Activated B cell treated with CpG ODN at 0.5 μM for 24 hours (primary cell): ENCODE measurements at regions of chr3 and their contacts with region 1.

Region 1: DNA sequence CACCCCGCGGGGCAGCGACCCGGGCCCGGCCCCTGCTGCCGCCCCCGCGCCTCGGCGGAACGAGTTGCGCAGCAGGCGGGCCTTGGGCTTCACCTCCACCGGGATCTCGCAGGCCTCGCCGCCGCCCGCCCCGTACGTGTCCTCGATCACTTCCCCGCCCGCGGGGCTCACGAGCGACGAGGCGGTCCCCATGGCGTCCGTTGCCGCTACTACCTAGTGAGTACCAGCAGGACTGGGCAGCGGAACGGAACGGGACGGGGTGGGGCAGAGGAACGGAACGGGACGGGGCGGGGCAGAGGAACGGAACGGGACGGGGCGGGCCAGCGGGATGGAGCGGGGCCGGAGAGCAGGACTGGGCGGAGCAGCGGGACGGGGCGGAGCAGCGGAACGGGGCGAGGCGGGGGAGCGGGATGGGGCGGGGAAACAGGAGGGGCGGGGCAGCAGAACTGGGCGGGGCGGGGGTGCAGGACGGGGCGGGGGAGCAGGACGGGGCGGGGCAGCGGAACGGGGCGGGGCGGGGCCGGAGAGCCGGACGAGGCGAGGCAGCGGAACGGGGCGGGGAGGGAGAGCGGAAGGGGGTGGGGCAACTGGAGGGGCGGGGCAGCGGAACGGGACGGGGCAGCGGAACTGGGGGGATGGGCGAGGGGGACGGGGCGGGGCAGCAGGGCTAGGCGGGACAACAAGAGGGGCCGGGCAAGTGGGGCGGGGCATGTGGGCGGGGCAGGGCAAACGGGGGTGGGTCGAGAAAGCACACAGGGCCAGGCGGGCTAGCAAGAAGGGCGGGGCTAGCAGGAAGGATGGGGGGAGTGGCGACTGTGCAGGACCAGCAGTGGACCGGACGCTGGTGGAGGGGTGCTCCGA is at the start of gene NPHP3:
- DNase-seq: peak; percentile 82
- ATAC-seq: peak; percentile 80
- H3K4me3 Mint-ChIP-seq: peak within 1 kb of the TSS; percentile 90
- H3K27ac Mint-ChIP-seq: peak within 1 kb of the TSS; percentile 85
- H3K4me1 Mint-ChIP-seq: peaks cover 31% of the 10 kb centered on the region
- H3K27me3 Mint-ChIP-seq: no peaks in the 10 kb centered on the region
- CTCF ChIP-seq: no peak
- total RNA-seq, gene NPHP3: 20.2 and 23.2 TPM in 2 replicates

Region 2: GRCh38 chr3:131026321-131027178 is 1695.8 kb before region 1 on chr3 and contains the starts of genes ASTE1 and NEK11:
- CTCF ChIA-PET with region 1: no interaction called
- POLR2A ChIA-PET with region 1: no interaction called
- intact Hi-C with region 1: loop called (anchors 1 kb)
- DNase-seq: peak; percentile 89
- ATAC-seq: peak; percentile 97
- H3K4me3 Mint-ChIP-seq: peak within 1 kb of the TSS; percentile 96
- H3K27ac Mint-ChIP-seq: peak within 1 kb of the TSS; percentile 97
- H3K4me1 Mint-ChIP-seq: peaks cover 52% of the 10 kb centered on the region
- H3K27me3 Mint-ChIP-seq: no peaks in the 10 kb centered on the region
- CTCF ChIP-seq: no peak
- total RNA-seq, gene ASTE1: 15.6 and 16.9 TPM in 2 replicates
- total RNA-seq, gene NEK11: 1.5 and 1.9 TPM in 2 replicates

Region 3: GRCh38 chr3:132659365-132660051 is 62.9 kb before region 1 on chr3 and contains the start of gene ACAD11:
- CTCF ChIA-PET with region 1: interaction called, 3 read pairs
- POLR2A ChIA-PET with region 1: interaction called, 6 read pairs
- intact Hi-C with region 1: loop called (anchors 1 kb)
- DNase-seq: peak; percentile 55
- ATAC-seq: peak; percentile 74
- H3K4me3 Mint-ChIP-seq: peak within 1 kb of the TSS; percentile 97
- H3K27ac Mint-ChIP-seq: peak within 1 kb of the TSS; percentile 93
- H3K4me1 Mint-ChIP-seq: peaks cover 35% of the 10 kb centered on the region
- H3K27me3 Mint-ChIP-seq: no peaks in the 10 kb centered on the region
- CTCF ChIP-seq: no peak
- total RNA-seq, gene ACAD11: 16.4 and 24.0 TPM in 2 replicates

Region 4: GRCh38 chr3:132911736-132912414 is 189.5 kb after region 1 on chr3:
- CTCF ChIA-PET with region 1: no interaction called
- POLR2A ChIA-PET with region 1: no interaction called
- intact Hi-C with region 1: no loop called
- DNase-seq: no peak
- ATAC-seq: no peak
- H3K4me3 Mint-ChIP-seq: no peak overlapping the region
- H3K27ac Mint-ChIP-seq: no peak overlapping the region
- H3K4me1 Mint-ChIP-seq: no peaks in the 10 kb centered on the region
- H3K27me3 Mint-ChIP-seq: no peaks in the 10 kb centered on the region
- CTCF ChIP-seq: no peak

Region 5: DNA sequence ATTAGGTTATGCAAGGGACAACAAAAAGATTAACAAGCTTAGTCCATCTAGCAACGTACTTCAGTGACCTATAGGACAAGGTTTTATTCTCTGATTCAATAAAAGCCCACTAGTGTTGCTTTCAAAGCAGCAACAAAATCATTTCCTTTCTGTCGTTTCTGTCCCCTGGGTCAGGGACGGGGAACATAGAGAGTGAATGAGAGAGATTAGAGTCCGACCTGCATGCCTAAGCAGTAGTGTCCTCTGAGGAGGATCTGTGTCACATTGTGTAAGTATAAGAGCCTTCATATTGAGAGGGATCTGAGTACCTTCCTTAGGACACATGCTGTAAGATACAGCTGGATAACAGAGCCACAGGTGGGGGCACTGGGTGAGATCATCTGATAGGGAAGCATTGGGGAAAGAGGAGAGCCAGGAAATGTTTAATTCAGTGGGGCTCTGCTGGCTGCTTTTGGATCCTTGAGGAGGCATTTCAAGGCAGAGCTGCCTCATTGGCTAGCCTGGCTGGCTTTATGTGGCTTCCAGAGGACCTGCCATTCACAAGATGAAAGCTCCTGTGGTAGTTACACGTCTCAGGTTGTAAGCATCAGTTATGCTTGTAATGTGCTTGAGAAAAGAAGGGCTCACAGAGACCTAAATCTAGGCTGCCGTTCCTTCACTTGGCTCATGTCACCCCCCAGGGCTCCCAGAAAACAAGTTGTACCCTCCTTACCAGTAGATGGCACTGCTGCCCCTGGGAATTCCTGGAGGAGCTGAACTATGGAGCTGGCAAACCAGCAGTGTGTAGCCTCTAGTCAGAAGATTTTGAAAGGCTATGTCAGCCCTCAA is 318.5 kb after region 1 on chr3:
- CTCF ChIA-PET with region 1: no interaction called
- POLR2A ChIA-PET with region 1: no interaction called
- intact Hi-C with region 1: no loop called
- DNase-seq: no peak
- ATAC-seq: no peak
- H3K4me3 Mint-ChIP-seq: no peak overlapping the region
- H3K27ac Mint-ChIP-seq: no peak overlapping the region
- H3K4me1 Mint-ChIP-seq: peaks cover 8% of the 10 kb centered on the region
- H3K27me3 Mint-ChIP-seq: peaks cover 27% of the 10 kb centered on the region
- CTCF ChIP-seq: no peak

Region 6: DNA sequence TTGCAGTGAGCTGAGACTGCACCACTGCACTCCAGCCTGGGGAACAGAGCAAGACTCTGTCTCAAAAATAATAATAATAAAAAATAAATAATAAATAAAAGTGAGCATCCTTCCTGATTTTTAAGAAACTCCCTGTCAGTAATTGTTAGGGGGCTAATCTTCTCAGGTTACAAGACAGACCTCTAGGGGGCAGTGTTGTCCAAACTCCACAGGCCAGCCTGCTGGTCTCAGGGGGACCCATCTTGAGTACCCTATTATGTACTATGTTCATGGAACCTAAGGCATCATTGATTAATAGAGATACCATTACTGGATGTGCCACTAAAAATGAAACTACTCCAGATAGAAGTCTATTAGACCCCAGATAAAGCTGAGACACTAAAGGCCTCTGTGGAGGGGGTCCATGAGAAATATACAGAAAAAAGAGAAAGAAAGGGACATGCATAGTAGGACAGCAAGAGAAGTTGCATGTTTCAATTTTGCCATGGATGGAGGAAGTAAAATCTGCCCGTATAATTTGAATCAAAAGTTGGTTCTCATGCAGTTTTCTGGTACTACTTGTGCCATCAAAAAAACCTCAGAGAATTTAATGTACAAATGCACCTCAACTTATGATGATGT is 765.6 kb after region 1 on chr3:
- CTCF ChIA-PET with region 1: no interaction called
- POLR2A ChIA-PET with region 1: interaction called, 16 read pairs
- intact Hi-C with region 1: no loop called
- DNase-seq: no peak
- ATAC-seq: peak; percentile 20
- H3K4me3 Mint-ChIP-seq: no peak overlapping the region
- H3K27ac Mint-ChIP-seq: no peak overlapping the region
- H3K4me1 Mint-ChIP-seq: peaks cover 57% of the 10 kb centered on the region
- H3K27me3 Mint-ChIP-seq: no peaks in the 10 kb centered on the region
- CTCF ChIP-seq: no peak

Region 7: DNA sequence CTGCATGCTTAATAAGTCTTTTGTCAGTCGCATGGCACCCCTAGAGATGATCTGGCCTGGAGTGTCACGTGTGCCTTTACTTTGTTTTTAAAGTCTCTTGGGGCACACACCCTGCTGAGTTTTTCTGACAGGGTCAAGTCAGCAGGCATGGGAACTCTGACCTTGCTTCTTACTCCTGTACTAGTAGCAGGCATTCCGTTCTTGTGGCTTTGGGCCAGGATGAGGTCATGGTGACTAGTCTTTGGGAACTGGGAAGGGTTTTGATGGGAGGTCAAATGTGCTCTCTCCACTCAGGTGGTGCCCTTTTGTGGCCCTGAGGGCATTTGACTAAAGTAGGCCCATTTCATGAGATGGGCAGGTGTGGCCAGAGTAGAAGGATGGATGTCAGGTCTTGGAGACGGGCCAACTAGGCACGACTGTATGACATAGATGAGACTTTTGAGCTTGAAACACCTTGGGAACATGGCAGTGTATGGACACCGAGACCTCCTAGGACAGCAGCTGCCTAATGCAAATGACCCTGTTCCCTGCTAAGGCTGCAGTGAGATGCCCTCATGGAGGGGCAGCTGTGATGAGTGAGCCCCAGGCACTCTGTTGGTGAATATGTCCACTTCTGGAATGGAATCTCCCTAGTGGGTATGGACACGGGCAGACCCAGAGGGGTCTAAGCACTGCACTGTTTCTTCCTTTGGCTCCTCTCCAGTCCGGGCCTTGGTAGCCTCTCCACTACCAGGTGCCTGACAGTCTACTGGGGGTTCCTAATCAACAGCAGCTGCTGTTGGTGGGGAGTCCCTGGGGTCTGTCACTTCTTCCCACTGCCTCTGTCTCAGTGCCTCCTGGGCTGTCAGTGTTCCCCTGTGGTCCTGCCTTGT is 1099.6 kb after region 1 on chr3:
- CTCF ChIA-PET with region 1: interaction called, 3 read pairs
- POLR2A ChIA-PET with region 1: no interaction called
- intact Hi-C with region 1: loop called (anchors 1 kb)
- DNase-seq: no peak
- ATAC-seq: no peak
- H3K4me3 Mint-ChIP-seq: no peak overlapping the region
- H3K27ac Mint-ChIP-seq: no peak overlapping the region
- H3K4me1 Mint-ChIP-seq: no peaks in the 10 kb centered on the region
- H3K27me3 Mint-ChIP-seq: no peaks in the 10 kb centered on the region
- CTCF ChIP-seq: no peak

Region 8: DNA sequence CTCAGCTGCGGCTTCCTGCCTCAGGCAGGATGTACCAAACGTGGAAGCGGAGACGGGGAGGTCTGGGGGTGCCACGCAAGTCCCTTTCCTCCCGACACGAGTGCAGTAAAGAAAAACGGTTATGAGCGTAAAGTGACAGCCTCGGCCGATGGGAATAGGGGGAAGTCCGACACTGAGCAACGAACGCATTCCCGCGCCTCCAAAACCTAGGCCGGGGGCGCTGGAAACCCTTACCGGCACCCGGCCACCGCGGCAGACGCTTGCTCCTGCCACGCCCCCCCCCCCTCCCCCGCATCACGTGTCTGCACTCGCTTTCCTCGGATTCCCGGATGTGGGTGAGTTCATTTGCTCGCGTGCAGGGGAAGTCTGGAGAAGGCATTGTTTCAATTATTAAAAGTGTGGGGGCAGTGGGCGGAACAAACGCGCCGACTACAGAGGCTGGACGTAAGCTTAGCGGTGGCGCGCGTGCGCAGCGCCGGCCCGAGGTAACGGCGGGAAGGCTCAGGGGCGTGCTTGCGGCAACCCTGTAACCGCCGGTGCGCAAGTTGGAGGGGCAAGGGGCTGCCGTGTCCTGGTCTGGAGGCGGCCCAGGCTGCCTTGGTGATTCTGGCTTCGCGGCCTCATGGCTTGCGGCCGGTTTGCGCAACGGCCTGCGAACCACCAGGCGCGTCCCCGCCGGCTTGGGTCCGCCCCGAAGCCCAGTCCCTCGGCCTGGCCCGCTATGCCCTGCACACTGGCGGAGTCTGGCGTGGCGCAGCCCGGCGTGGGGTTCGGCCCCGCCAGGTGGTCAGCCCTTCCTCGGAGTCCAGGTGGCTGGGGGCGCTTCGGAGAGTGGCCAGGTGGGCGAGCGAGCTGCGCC is 1763.6 kb after region 1 on chr3 and contains the starts of genes ANAPC13 and CEP63:
- CTCF ChIA-PET with region 1: no interaction called
- POLR2A ChIA-PET with region 1: interaction called, 4 read pairs
- intact Hi-C with region 1: loop called (anchors 1 kb)
- DNase-seq: peak; percentile 84
- ATAC-seq: peak; percentile 82
- H3K4me3 Mint-ChIP-seq: peak within 1 kb of the TSS; percentile 99
- H3K27ac Mint-ChIP-seq: peak within 1 kb of the TSS; percentile 98
- H3K4me1 Mint-ChIP-seq: peaks cover 51% of the 10 kb centered on the region
- H3K27me3 Mint-ChIP-seq: no peaks in the 10 kb centered on the region
- CTCF ChIP-seq: no peak
- total RNA-seq, gene ANAPC13: 27.5 and 31.3 TPM in 2 replicates
- total RNA-seq, gene CEP63: 21.3 and 24.6 TPM in 2 replicates